ENCODE measurements at regions of chr4 and their contacts with region 1.

Region 1: GRCh38 chr4:22410645-22411247 is 105.1 kb downstream of the ADGRA3 start:
- DNase-seq: no peak
- ATAC-seq: no peak

Region 2: GRCh38 chr4:21457086-21457840 is 953.5 kb before region 1 on chr4:
- intact Hi-C with region 1: no loop called
- DNase-seq: no peak
- ATAC-seq: no peak

Region 3: GRCh38 chr4:22607382-22607781 is 196.6 kb after region 1 on chr4:
- intact Hi-C with region 1: loop called (anchors 2 kb)
- DNase-seq: no peak
- ATAC-seq: peak; percentile 89